ENCODE measurements at regions of chr19 and their contacts with region 1.

Region 1: GRCh38 chr19:36489118-36489919 is at the start of gene ZNF566:
- DNase-seq: peak; percentile 95
- H3K4me3 Mint-ChIP-seq: peak within 1 kb of the TSS; percentile 96
- H3K27ac Mint-ChIP-seq: peak within 1 kb of the TSS; percentile 98
- H3K4me1 Mint-ChIP-seq: peaks cover 19% of the 10 kb centered on the region
- H3K27me3 Mint-ChIP-seq: no peaks in the 10 kb centered on the region
- total RNA-seq, gene ZNF566: 4.4 to 5.3 TPM

Region 2: GRCh38 chr19:35748106-35749020 is 741.0 kb before region 1 on chr19 and contains the start of gene LIN37:
- CTCF ChIA-PET with region 1: no interaction called
- intact Hi-C with region 1: loop called (anchors 5 kb)
- DNase-seq: peak; percentile 100
- H3K4me3 Mint-ChIP-seq: peak within 1 kb of the TSS; percentile 98
- H3K27ac Mint-ChIP-seq: peak within 1 kb of the TSS; percentile 92
- H3K4me1 Mint-ChIP-seq: peaks cover 44% of the 10 kb centered on the region
- H3K27me3 Mint-ChIP-seq: no peaks in the 10 kb centered on the region
- total RNA-seq, gene LIN37: 5.7 to 9.7 TPM

Region 3: GRCh38 chr19:36378625-36379509 is 110.5 kb before region 1 on chr19 and contains the start of gene ZFP14:
- CTCF ChIA-PET with region 1: interaction called, 3 read pairs
- intact Hi-C with region 1: loop called (anchors 2 kb)
- DNase-seq: peak; percentile 96
- H3K4me3 Mint-ChIP-seq: peak within 1 kb of the TSS; percentile 90
- H3K27ac Mint-ChIP-seq: peak within 1 kb of the TSS; percentile 84
- H3K4me1 Mint-ChIP-seq: peaks cover 10% of the 10 kb centered on the region
- H3K27me3 Mint-ChIP-seq: no peaks in the 10 kb centered on the region
- total RNA-seq, gene ZFP14: 2.2 to 3.1 TPM

Region 4: DNA sequence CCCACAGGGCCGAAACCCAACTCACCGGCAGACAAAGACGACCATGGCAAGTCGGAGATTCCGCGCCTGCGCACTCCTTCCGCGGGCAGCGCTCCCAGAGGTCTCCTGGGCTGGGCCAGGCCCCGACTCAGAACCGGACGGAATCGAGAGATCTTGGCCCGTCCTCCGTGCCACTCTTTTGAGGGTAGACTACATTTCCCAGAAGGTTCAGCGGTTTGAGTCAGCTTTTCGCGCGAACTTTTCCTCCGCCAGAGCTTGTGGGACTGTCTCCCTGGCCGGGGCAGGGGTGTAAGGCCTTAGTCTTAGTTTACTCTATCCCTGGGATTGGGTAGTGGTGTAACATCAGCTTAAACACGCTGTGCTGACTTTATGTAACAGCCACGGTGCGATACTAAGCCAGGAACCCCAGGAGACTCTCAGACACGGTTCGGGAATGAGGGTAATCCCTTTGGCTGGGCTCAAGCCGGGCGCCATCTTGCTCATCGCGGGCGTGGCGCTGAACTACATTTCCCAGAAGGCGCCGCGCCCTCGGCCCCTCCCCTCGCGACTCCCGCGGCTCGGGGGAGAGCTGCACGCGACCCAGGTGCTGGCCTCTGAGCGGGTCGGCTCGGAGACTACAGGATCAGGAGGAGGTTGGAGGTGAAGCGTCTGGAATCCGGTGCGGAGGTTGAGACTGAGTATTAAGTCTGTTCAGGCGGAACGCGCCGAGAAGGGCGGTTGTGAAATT is 39.0 kb after region 1 on chr19 and contains the start of gene ZNF260:
- CTCF ChIA-PET with region 1: interaction called, 5 read pairs
- intact Hi-C with region 1: loop called (anchors 1 kb)
- DNase-seq: peak; percentile 96
- H3K4me3 Mint-ChIP-seq: peak within 1 kb of the TSS; percentile 100
- H3K27ac Mint-ChIP-seq: peak within 1 kb of the TSS; percentile 98
- H3K4me1 Mint-ChIP-seq: peaks cover 16% of the 10 kb centered on the region
- H3K27me3 Mint-ChIP-seq: no peaks in the 10 kb centered on the region
- total RNA-seq, gene ZNF260: 3.7 to 5.4 TPM

Region 5: GRCh38 chr19:36605101-36605876 is 116.0 kb after region 1 on chr19 and contains the start of gene ZNF382:
- CTCF ChIA-PET with region 1: no interaction called
- intact Hi-C with region 1: loop called (anchors 1 kb)
- DNase-seq: peak; percentile 87
- H3K4me3 Mint-ChIP-seq: peak within 1 kb of the TSS; percentile 81
- H3K27ac Mint-ChIP-seq: peak within 1 kb of the TSS; percentile 93
- H3K4me1 Mint-ChIP-seq: peaks cover 19% of the 10 kb centered on the region
- H3K27me3 Mint-ChIP-seq: no peaks in the 10 kb centered on the region
- total RNA-seq, gene ZNF382: 7.5 to 7.6 TPM

Region 6: GRCh38 chr19:36772311-36773222 is 283.2 kb after region 1 on chr19 and contains the start of gene ZNF850:
- CTCF ChIA-PET with region 1: no interaction called
- intact Hi-C with region 1: loop called (anchors 5 kb)
- DNase-seq: peak; percentile 97
- H3K4me3 Mint-ChIP-seq: peak within 1 kb of the TSS; percentile 98
- H3K27ac Mint-ChIP-seq: peak within 1 kb of the TSS; percentile 90
- H3K4me1 Mint-ChIP-seq: peaks cover 21% of the 10 kb centered on the region
- H3K27me3 Mint-ChIP-seq: peaks cover 2% of the 10 kb centered on the region
- total RNA-seq, gene ZNF850: 11.2 to 11.3 TPM

Region 7: DNA sequence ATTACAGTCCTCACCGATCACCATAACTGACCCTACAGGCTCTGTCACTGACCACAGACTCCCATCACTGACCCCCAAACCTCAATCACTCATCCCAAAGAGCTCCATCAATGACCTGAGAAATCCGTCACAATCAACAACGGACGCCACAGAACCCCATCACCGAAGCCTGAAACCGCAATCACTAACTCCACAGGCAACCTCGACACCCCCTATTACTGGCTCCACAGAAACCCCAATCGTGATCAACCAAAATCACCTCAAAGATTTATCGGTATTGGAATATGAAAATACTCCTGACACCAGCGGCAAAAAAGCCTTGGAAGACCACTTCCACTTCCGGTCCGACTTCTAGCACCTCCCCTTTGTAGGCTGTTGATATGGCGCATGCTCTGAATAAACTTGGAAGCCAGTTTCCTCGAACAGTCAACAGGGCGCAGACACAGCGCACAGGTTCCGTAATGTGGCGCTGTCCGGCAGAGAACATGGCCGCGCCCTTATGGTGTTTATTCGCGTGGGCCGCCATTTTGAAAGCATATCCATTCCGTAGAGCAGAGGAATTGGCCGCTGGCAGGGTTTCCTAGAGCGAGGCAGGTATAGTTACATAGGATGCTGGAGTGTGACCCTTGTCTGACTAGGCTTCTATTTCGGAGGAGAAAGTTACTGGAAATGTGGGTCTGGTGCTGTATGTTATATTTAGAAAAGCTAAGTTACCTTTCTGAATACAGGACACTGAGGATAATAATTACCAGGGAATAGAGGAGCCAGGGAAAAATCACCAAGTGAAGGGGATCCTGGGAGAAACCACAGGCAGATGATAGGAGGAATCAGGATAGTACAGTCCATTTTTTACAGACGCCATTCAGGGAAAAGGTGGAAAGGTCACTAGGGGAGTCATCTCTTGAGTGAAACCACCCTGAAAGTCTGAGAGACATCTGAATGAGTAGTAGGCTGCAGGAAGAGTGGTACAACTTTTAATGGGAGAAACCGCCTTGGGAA is 683.3 kb after region 1 on chr19 and contains the start of gene ZNF585A:
- CTCF ChIA-PET with region 1: no interaction called
- intact Hi-C with region 1: loop called (anchors 2 kb)
- DNase-seq: peak; percentile 92
- H3K4me3 Mint-ChIP-seq: no peak within 1 kb of the TSS
- H3K27ac Mint-ChIP-seq: no peak within 1 kb of the TSS
- H3K4me1 Mint-ChIP-seq: no peaks in the 10 kb centered on the region
- H3K27me3 Mint-ChIP-seq: no peaks in the 10 kb centered on the region
- total RNA-seq, gene ZNF585A: 8.9 to 9.1 TPM

Measured in activated naive CD4-positive, alpha-beta T cell treated with anti-CD3 and anti-CD28 coated beads for 36 hours (primary cell).